Activated CD8-positive, alpha-beta T cell treated with anti-CD3 and anti-CD28 coated beads, Interleukin-2, amount 10 ng/mL, durations not matched to agents 7 days and 5 days (primary cell): ENCODE measurements at regions of chrX and their contacts with region 1.

Region 1: GRCh38 chrX:40647307-40648197 is at the start of gene CXorf38:
- DNase-seq: peak; percentile 92
- ATAC-seq: peak; percentile 81
- H3K4me3 Mint-ChIP-seq: peak within 1 kb of the TSS; percentile 94
- H3K27ac Mint-ChIP-seq: peak within 1 kb of the TSS; percentile 96
- H3K4me1 Mint-ChIP-seq: peaks cover 12% of the 10 kb centered on the region
- H3K27me3 Mint-ChIP-seq: no peaks in the 10 kb centered on the region
- total RNA-seq, gene CXorf38: 19.3 to 19.9 TPM

Region 2: DNA sequence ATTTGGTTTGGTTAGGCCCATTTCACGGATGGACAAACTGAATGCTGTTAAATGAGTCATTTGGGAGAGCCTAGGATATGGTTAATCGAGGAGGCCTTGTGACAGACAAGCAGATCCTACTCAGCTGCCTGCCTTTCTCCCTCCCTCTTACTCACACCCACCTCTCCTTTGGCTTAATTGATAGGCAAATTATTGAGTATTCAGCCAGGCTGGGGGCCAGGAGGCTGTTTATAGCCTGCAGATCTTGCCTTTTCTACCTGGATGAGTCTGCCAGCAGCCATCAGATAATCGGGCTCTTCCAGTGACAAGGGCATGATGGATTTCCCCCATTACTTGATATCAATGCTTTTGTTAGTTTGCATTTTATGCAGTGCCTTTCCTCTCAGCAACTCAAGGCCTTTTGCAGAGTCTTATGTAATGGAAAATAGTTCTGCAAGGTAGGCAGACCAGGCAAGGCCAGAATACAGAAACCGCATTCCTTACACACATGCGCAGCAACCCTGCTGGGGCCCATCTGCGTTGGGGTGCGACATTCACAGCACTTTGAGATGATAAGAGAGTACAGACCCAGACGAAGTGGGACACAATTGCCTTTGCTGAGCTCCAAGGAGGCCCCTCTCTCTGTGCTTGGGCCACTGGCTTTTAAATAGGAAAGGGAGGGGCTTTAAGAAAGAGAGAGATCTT is 163.0 kb before region 1 on chrX:
- CTCF ChIA-PET with region 1: no interaction called
- POLR2A ChIA-PET with region 1: no interaction called
- DNase-seq: no peak
- ATAC-seq: no peak
- H3K4me3 Mint-ChIP-seq: no peak overlapping the region
- H3K27ac Mint-ChIP-seq: no peak overlapping the region
- H3K4me1 Mint-ChIP-seq: peaks cover 12% of the 10 kb centered on the region
- H3K27me3 Mint-ChIP-seq: no peaks in the 10 kb centered on the region

Region 3: GRCh38 chrX:40792433-40792832 is 144.9 kb after region 1 on chrX:
- CTCF ChIA-PET with region 1: interaction called, 64 read pairs
- POLR2A ChIA-PET with region 1: interaction called, 3 read pairs
- DNase-seq: no peak
- ATAC-seq: no peak
- H3K4me3 Mint-ChIP-seq: no peak overlapping the region
- H3K27ac Mint-ChIP-seq: no peak overlapping the region
- H3K4me1 Mint-ChIP-seq: peaks cover 9% of the 10 kb centered on the region
- H3K27me3 Mint-ChIP-seq: peaks cover 5% of the 10 kb centered on the region

Region 4: GRCh38 chrX:40887476-40887875 is 239.9 kb after region 1 on chrX:
- CTCF ChIA-PET with region 1: no interaction called
- POLR2A ChIA-PET with region 1: no interaction called
- DNase-seq: no peak
- ATAC-seq: no peak
- H3K4me3 Mint-ChIP-seq: no peak overlapping the region
- H3K27ac Mint-ChIP-seq: no peak overlapping the region
- H3K4me1 Mint-ChIP-seq: peaks cover 3% of the 10 kb centered on the region
- H3K27me3 Mint-ChIP-seq: no peaks in the 10 kb centered on the region